ENCODE measurements at regions of chr1 and their contacts with region 1.

Region 1: GRCh38 chr1:151254217-151255213 is at the start of gene PSMD4:
- DNase-seq: peak; percentile 96
- ATAC-seq: peak; percentile 94
- H3K4me3 Mint-ChIP-seq: peak within 1 kb of the TSS; percentile 83
- H3K27ac Mint-ChIP-seq: peak within 1 kb of the TSS; percentile 88
- H3K4me1 Mint-ChIP-seq: peaks cover 27% of the 10 kb centered on the region
- H3K27me3 Mint-ChIP-seq: no peaks in the 10 kb centered on the region
- CTCF ChIP-seq: no peak
- total RNA-seq, gene PSMD4: 203 to 214 TPM

Region 2: DNA sequence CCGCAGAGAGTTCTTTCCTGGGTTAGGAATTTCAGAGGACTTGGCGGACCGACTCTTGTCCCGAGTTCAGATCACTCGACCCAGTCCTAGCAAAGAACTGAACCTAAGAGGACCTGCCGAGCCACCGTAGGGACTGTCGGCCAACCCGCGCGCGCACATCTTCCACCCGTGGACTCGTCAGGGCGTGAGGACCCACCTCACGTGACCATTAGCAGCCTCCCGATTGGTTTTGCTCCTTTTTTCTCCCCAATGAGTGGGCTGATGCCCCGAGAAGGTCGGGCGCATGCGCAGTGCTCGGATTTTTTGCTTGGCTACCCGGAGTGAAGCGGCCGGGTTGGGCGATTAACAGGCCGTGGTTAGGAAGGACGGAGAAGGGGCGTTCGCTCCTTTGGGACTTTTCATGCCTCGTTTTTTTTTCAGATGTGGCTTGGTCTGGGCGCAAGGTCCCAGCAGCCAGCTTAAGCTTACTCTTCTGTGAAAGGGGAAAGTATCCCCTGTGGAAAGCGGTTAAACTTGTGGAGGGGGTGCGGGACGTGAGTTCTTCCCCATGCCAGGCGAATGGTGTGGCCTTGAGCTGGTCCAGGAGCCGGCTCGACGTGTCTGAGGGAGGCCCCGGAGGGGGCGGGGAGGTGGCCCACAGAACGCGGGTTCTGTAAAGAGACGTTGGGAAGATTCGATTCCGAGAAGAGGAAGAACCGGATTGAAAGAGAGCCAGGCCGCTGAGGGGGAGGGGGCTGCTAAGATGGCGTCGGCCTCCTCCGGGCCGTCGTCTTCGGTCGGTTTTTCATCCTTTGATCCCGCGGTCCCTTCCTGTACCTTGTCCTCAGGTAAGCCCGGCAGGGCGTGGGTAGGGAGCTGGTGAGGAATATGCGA is 56.0 kb before region 1 on chr1 and contains the start of gene PIP5K1A:
- CTCF ChIA-PET with region 1: interaction called, 28 read pairs
- POLR2A ChIA-PET with region 1: interaction called, 7 read pairs
- intact Hi-C with region 1: loop called (anchors 5 kb)
- DNase-seq: peak; percentile 99
- ATAC-seq: peak; percentile 86
- H3K4me3 Mint-ChIP-seq: peak within 1 kb of the TSS; percentile 98
- H3K27ac Mint-ChIP-seq: peak within 1 kb of the TSS; percentile 98
- H3K4me1 Mint-ChIP-seq: peaks cover 33% of the 10 kb centered on the region
- H3K27me3 Mint-ChIP-seq: no peaks in the 10 kb centered on the region
- CTCF ChIP-seq: no peak
- total RNA-seq, gene PIP5K1A: 63.1 to 66.1 TPM

Region 3: GRCh38 chr1:151267760-151268159 is 13.2 kb after region 1 on chr1:
- CTCF ChIA-PET with region 1: interaction called, 17 read pairs
- POLR2A ChIA-PET with region 1: interaction called, 6 read pairs
- intact Hi-C with region 1: no loop called
- DNase-seq: no peak
- ATAC-seq: no peak
- H3K4me3 Mint-ChIP-seq: no peak overlapping the region
- H3K27ac Mint-ChIP-seq: no peak overlapping the region
- H3K4me1 Mint-ChIP-seq: no peaks in the 10 kb centered on the region
- H3K27me3 Mint-ChIP-seq: no peaks in the 10 kb centered on the region
- CTCF ChIP-seq: no peak

Measured in activated CD8-positive, alpha-beta T cell treated with anti-CD3 and anti-CD28 coated beads for 36 hours (primary cell).